GM12878 (cell line): ENCODE measurements at regions of chr12 and their contacts with region 1.

Region 1: GRCh38 chr12:116559162-116559935 is at the start of gene MAP1LC3B2:
- DNase-seq: peak; percentile 97
- ATAC-seq: peak; percentile 87
- H3K4me3 ChIP-seq: peak within 1 kb of the TSS; percentile 35
- H3K27ac ChIP-seq: peak within 1 kb of the TSS; percentile 90
- H3K4me1 ChIP-seq: peaks cover 32% of the 10 kb centered on the region
- H3K27me3 ChIP-seq: no peaks in the 10 kb centered on the region
- CTCF ChIP-seq: no peak
- EP300 ChIP-seq: peak; percentile 68 to 93
- POLR2A ChIP-seq: no peak
- RAD21 ChIP-seq: 0 out of 2 replicates have a peak, but pooled peaks have one; percentile 40
- polyA plus RNA-seq, gene MAP1LC3B2: 0.23 to 0.40 TPM

Region 2: DNA sequence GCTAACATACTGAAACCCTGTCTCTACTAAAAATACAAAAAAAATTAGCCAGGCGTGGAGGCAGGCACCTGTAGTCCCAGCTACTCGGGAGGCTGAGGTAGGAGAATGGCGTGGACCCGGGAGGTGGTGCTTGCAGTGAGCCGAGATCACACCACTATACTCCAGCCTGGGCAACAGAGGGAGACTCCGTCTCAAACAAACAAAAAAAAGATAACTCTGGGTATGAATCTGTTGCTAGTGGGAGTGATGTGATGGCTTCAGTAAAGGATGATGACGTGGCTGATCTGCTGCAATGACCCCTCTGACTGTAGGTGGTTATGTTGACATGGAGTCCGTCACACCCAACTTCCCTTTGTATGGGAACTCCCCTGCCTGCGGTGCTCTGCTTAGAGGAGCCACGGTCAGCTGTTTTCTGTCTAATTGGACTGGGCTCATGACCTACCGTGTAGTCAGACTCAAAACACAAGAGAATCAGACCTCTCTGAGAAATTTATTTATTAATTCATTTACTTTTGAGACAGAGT is 222.7 kb before region 1 on chr12:
- CTCF ChIA-PET with region 1: interaction called, 5 read pairs
- POLR2A ChIA-PET with region 1: interaction called, 3 read pairs
- RAD21 ChIA-PET with region 1: interaction called, 8 read pairs
- SMC1A ChIA-PET with region 1: interaction called, 3 read pairs
- in situ Hi-C with region 1: no loop called
- intact Hi-C with region 1: loop called (anchors 1 kb)
- DNase-seq: peak; percentile 67
- ATAC-seq: peak; percentile 91
- H3K4me3 ChIP-seq: no peak overlapping the region
- H3K27ac ChIP-seq: peak overlapping the region; percentile 51
- H3K4me1 ChIP-seq: peaks cover 37% of the 10 kb centered on the region
- H3K27me3 ChIP-seq: no peaks in the 10 kb centered on the region
- CTCF ChIP-seq: no peak
- EP300 ChIP-seq: peak in 1 of 2 experiments; percentile 43; a peak in 1 of 4 replicates
- POLR2A ChIP-seq: no peak
- RAD21 ChIP-seq: no peak

Region 3: DNA sequence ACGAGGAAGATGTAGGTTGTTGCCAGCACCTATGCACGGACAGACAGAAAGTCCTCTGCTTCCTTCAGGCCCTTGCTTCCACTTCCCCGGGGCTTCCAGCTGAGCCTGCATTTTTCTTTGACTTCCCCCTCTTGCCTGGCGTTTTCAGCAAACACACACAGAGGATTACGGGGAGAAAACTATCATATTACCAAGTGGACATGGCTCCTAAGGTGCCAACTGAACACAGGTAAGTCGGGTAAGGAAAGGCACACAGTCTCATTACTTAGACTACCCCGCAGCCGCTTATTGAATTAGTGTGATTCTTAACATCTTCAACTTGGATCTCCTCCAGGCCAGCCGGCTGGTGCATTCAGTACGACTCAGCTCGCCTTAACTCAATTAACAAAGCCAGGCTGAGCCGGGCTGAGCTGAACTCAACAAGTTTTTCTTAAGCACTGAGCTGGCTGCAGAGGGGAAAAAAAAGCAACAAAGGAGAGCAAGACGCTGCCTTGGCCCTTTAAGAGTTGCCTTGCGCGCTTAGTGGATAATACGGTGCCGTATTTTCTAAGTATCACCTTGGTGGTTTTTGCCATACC is 19.4 kb before region 1 on chr12:
- CTCF ChIA-PET with region 1: interaction called, 23 read pairs
- POLR2A ChIA-PET with region 1: interaction called, 47 read pairs
- RAD21 ChIA-PET with region 1: interaction called, 64 read pairs
- SMC1A ChIA-PET with region 1: interaction called, 106 read pairs
- in situ Hi-C with region 1: no loop called
- intact Hi-C with region 1: loop called (anchors 1 kb)
- DNase-seq: no peak
- ATAC-seq: no peak
- H3K4me3 ChIP-seq: no peak overlapping the region
- H3K27ac ChIP-seq: no peak overlapping the region
- H3K4me1 ChIP-seq: peaks cover 34% of the 10 kb centered on the region
- H3K27me3 ChIP-seq: no peaks in the 10 kb centered on the region
- CTCF ChIP-seq: no peak
- EP300 ChIP-seq: no peak
- POLR2A ChIP-seq: no peak
- RAD21 ChIP-seq: no peak

Region 4: GRCh38 chr12:116599285-116600136 is 40.2 kb after region 1 on chr12:
- CTCF ChIA-PET with region 1: interaction called, 9 read pairs
- POLR2A ChIA-PET with region 1: no interaction called
- RAD21 ChIA-PET with region 1: interaction called, 7 read pairs
- SMC1A ChIA-PET with region 1: interaction called, 13 read pairs
- in situ Hi-C with region 1: no loop called
- intact Hi-C with region 1: no loop called
- DNase-seq: peak; percentile 7
- ATAC-seq: peak; percentile 63
- H3K4me3 ChIP-seq: no peak overlapping the region
- H3K27ac ChIP-seq: no peak overlapping the region
- H3K4me1 ChIP-seq: peaks cover 3% of the 10 kb centered on the region; the same call in 1 of the 2 replicates
- H3K27me3 ChIP-seq: no peaks in the 10 kb centered on the region
- CTCF ChIP-seq: peak; percentile 41 to 57 (median 42)
- EP300 ChIP-seq: no peak
- POLR2A ChIP-seq: no peak
- RAD21 ChIP-seq: peak; percentile 75

Region 5: DNA sequence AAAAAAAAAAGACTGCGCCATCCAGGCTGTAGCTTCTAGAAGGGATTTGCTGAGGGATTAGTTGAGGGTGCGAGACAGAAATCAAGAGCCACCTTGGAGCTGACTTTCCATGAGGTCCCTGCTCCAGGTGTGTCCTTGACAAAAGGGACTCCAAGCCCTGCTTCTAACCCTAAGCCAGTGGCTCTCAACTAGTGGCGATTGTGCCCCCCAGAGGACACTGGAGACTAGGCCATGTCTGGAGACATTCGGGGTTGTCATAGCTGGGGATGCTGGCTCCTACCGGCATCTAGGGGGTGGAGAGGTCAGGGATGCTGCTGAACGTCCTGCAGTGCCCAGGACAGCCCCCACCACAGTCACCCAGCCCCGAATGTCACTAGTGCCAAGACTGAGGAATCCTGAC is 138.0 kb after region 1 on chr12:
- CTCF ChIA-PET with region 1: no interaction called
- POLR2A ChIA-PET with region 1: interaction called, 4 read pairs
- RAD21 ChIA-PET with region 1: no interaction called
- SMC1A ChIA-PET with region 1: no interaction called
- in situ Hi-C with region 1: no loop called
- intact Hi-C with region 1: loop called (anchors 2 kb)
- DNase-seq: no peak
- ATAC-seq: peak; percentile 85
- H3K4me3 ChIP-seq: no peak overlapping the region
- H3K27ac ChIP-seq: no peak overlapping the region
- H3K4me1 ChIP-seq: peaks cover 13% of the 10 kb centered on the region
- H3K27me3 ChIP-seq: peaks cover 6 to 19% of the 10 kb centered on the region in 2 experiments
- CTCF ChIP-seq: peak; percentile 31 to 51 (median 39); a peak in 4 of 6 replicates
- EP300 ChIP-seq: no peak
- POLR2A ChIP-seq: no peak
- RAD21 ChIP-seq: peak; percentile 78

Region 6: GRCh38 chr12:116749884-116750283 is 190.5 kb after region 1 on chr12:
- CTCF ChIA-PET with region 1: no interaction called
- POLR2A ChIA-PET with region 1: no interaction called
- RAD21 ChIA-PET with region 1: no interaction called
- SMC1A ChIA-PET with region 1: no interaction called
- in situ Hi-C with region 1: no loop called
- intact Hi-C with region 1: no loop called
- DNase-seq: no peak
- ATAC-seq: no peak
- H3K4me3 ChIP-seq: no peak overlapping the region
- H3K27ac ChIP-seq: no peak overlapping the region
- H3K4me1 ChIP-seq: no peaks in the 10 kb centered on the region
- H3K27me3 ChIP-seq: no peaks in the 10 kb centered on the region
- CTCF ChIP-seq: no peak
- EP300 ChIP-seq: no peak
- POLR2A ChIP-seq: no peak
- RAD21 ChIP-seq: no peak